ENCODE measurements at regions of chr2 and their contacts with region 1.

Region 1: GRCh38 chr2:206159346-206160124 is at the starts of genes EEF1B2 and NDUFS1:
- DNase-seq: peak; percentile 95 to 99 (median 96)
- ATAC-seq: peak; percentile 85
- H3K4me3 ChIP-seq: peak within 1 kb of the TSS; percentile 73 to 93
- H3K4me3 Mint-ChIP-seq: peak within 1 kb of the TSS; percentile 99
- H3K27ac ChIP-seq: peak within 1 kb of the TSS; percentile 81 to 91
- H3K27ac Mint-ChIP-seq: peak within 1 kb of the TSS; percentile 100
- H3K4me1 ChIP-seq: peaks cover 30% of the 10 kb centered on the region
- H3K4me1 Mint-ChIP-seq: peaks cover 59% of the 10 kb centered on the region
- H3K27me3 ChIP-seq: no peaks in the 10 kb centered on the region
- H3K27me3 Mint-ChIP-seq: no peaks in the 10 kb centered on the region
- CTCF ChIP-seq: no peak
- total RNA-seq, gene EEF1B2: 1,147 to 1,208 TPM
- total RNA-seq, gene NDUFS1: 23.7 to 28.7 TPM

Region 2: GRCh38 chr2:206274434-206275268 is 115.1 kb after region 1 on chr2 and contains the start of gene ZDBF2:
- CTCF ChIA-PET with region 1: no interaction called
- POLR2A ChIA-PET with region 1: interaction called, 3 read pairs
- intact Hi-C with region 1: loop called (anchors 1 to 5 kb)
- DNase-seq: peak in 8 of 9 experiments; percentile 6 to 77 (median 56)
- ATAC-seq: peak; percentile 73
- H3K4me3 ChIP-seq: peak within 1 kb of the TSS; percentile 48 to 52
- H3K4me3 Mint-ChIP-seq: peak within 1 kb of the TSS; percentile 89
- H3K27ac ChIP-seq: peak within 1 kb of the TSS; percentile 46 to 59
- H3K27ac Mint-ChIP-seq: peak within 1 kb of the TSS; percentile 90
- H3K4me1 ChIP-seq: peaks cover 13% of the 10 kb centered on the region
- H3K4me1 Mint-ChIP-seq: peaks cover 18% of the 10 kb centered on the region
- H3K27me3 ChIP-seq: peaks cover 6 to 16% of the 10 kb centered on the region in 2 experiments
- H3K27me3 Mint-ChIP-seq: peaks cover 42% of the 10 kb centered on the region
- CTCF ChIP-seq: no peak
- total RNA-seq, gene ZDBF2: 39.2 to 42.3 TPM

Region 3: DNA sequence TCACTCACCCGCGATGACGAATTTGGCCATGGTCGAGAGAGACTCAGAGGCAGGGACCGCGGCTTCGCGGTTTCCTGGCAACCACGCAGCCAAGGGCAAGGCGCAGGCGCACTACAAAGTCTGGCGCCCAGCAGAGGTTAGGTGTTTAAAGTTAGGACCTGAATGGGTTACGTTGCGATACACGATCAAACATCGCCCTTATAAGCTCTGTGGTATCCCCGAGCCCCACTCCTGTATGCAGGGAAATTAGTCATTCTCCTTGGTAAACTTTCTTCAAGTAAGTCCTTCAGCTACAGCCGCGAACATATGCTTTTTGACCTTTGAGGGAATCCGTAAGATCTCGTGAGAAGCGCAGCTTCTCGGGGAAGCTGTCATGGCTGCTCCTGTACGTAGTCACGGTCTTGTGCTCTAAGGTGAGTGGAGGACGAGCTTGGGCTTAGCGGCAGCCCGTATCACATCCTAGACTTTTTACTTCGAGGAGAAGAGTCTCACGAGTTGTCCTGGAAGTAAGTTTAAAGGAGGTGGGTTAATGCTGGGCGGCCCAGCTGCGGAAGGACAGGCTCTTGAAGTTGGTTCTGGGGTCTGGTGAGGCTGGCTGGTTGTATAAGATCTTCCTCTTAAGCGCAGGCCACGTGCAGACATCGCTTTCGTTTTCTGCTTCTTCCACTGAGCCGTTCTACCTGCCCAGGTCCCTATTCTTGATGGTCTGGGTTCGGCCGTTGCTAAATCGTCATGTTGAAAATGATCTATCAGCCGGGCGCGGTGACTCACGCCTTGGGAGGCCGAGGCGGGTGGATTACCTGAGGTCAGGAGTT is 605.9 kb after region 1 on chr2 and contains the starts of genes FASTKD2 and MDH1B:
- CTCF ChIA-PET with region 1: no interaction called
- POLR2A ChIA-PET with region 1: no interaction called
- intact Hi-C with region 1: loop called in 1 of 2 experiments (anchors 2 kb)
- DNase-seq: peak; percentile 64 to 94 (median 81)
- ATAC-seq: peak; percentile 87
- H3K4me3 ChIP-seq: peak within 1 kb of the TSS; percentile 62 to 94
- H3K4me3 Mint-ChIP-seq: peak within 1 kb of the TSS; percentile 94
- H3K27ac ChIP-seq: peak within 1 kb of the TSS; percentile 93 to 97
- H3K27ac Mint-ChIP-seq: peak within 1 kb of the TSS; percentile 98
- H3K4me1 ChIP-seq: peaks cover 40% of the 10 kb centered on the region
- H3K4me1 Mint-ChIP-seq: peaks cover 41% of the 10 kb centered on the region
- H3K27me3 ChIP-seq: no peaks in the 10 kb centered on the region
- H3K27me3 Mint-ChIP-seq: no peaks in the 10 kb centered on the region
- CTCF ChIP-seq: no peak
- total RNA-seq, gene FASTKD2: 31.3 to 33.8 TPM
- total RNA-seq, gene MDH1B: 0.19 to 0.33 TPM

Region 4: GRCh38 chr2:208025037-208025813 is 1865.7 kb after region 1 on chr2 and contains the start of gene PLEKHM3:
- CTCF ChIA-PET with region 1: no interaction called
- POLR2A ChIA-PET with region 1: no interaction called
- intact Hi-C with region 1: loop called (anchors 5 kb)
- DNase-seq: peak; percentile 53 to 90 (median 71)
- ATAC-seq: peak; percentile 76
- H3K4me3 ChIP-seq: peak within 1 kb of the TSS; percentile 79 to 80
- H3K4me3 Mint-ChIP-seq: peak within 1 kb of the TSS; percentile 98
- H3K27ac ChIP-seq: peak within 1 kb of the TSS; percentile 64 to 67
- H3K27ac Mint-ChIP-seq: peak within 1 kb of the TSS; percentile 95
- H3K4me1 ChIP-seq: peaks cover 6% of the 10 kb centered on the region
- H3K4me1 Mint-ChIP-seq: peaks cover 30% of the 10 kb centered on the region
- H3K27me3 ChIP-seq: no peaks in the 10 kb centered on the region
- H3K27me3 Mint-ChIP-seq: no peaks in the 10 kb centered on the region
- CTCF ChIP-seq: no peak
- total RNA-seq, gene PLEKHM3: 10.9 to 11.3 TPM